Activated CD4-positive, alpha-beta T cell treated with anti-CD3 and anti-CD28 coated beads, Interleukin-2, amount 10 ng/mL, durations not matched to agents 24 days and 14 days (primary cell): ENCODE measurements at regions of chr10 and their contacts with region 1.

Region 1: GRCh38 chr10:119834188-119834587 is 38.5 kb downstream of the MCMBP start:
- DNase-seq: no peak
- H3K4me3 Mint-ChIP-seq: peak overlapping the region; percentile 24
- H3K27ac Mint-ChIP-seq: peak overlapping the region; percentile 72
- H3K4me1 Mint-ChIP-seq: peaks cover 22% of the 10 kb centered on the region
- H3K27me3 Mint-ChIP-seq: no peaks in the 10 kb centered on the region

Region 2: GRCh38 chr10:119784340-119785070 is 49.7 kb before region 1 on chr10:
- intact Hi-C with region 1: loop called (anchors 5 kb)
- DNase-seq: peak; percentile 72
- H3K4me3 Mint-ChIP-seq: peak overlapping the region; percentile 23
- H3K27ac Mint-ChIP-seq: peak overlapping the region; percentile 4
- H3K4me1 Mint-ChIP-seq: peaks cover 23% of the 10 kb centered on the region
- H3K27me3 Mint-ChIP-seq: no peaks in the 10 kb centered on the region